Prostate gland (tissue), 2 donors: ENCODE measurements at regions of chr5 and their contacts with region 1.

Region 1: GRCh38 chr5:38556599-38557305 is at the start of gene LIFR:
- DNase-seq: peak; percentile 84
- H3K4me3 ChIP-seq: peak within 1 kb of the TSS; percentile 90 to 96
- H3K27ac ChIP-seq: peak within 1 kb of the TSS; percentile 99
- H3K4me1 ChIP-seq: no peaks in the 10 kb centered on the region
- H3K27me3 ChIP-seq: no peaks in the 10 kb centered on the region
- CTCF ChIP-seq: no peak
- POLR2A ChIP-seq: peak; percentile 81
- total RNA-seq, gene LIFR: 68.5 to 120 TPM

Region 2: GRCh38 chr5:38607396-38607795 is 50.6 kb after region 1 on chr5:
- intact Hi-C with region 1: no loop called
- DNase-seq: no peak
- H3K4me3 ChIP-seq: no peak overlapping the region
- H3K27ac ChIP-seq: peak overlapping the region in 1 of 2 donors; percentile 48
- H3K4me1 ChIP-seq: no peaks in the 10 kb centered on the region
- H3K27me3 ChIP-seq: no peaks in the 10 kb centered on the region
- CTCF ChIP-seq: no peak
- POLR2A ChIP-seq: no peak

Region 3: DNA sequence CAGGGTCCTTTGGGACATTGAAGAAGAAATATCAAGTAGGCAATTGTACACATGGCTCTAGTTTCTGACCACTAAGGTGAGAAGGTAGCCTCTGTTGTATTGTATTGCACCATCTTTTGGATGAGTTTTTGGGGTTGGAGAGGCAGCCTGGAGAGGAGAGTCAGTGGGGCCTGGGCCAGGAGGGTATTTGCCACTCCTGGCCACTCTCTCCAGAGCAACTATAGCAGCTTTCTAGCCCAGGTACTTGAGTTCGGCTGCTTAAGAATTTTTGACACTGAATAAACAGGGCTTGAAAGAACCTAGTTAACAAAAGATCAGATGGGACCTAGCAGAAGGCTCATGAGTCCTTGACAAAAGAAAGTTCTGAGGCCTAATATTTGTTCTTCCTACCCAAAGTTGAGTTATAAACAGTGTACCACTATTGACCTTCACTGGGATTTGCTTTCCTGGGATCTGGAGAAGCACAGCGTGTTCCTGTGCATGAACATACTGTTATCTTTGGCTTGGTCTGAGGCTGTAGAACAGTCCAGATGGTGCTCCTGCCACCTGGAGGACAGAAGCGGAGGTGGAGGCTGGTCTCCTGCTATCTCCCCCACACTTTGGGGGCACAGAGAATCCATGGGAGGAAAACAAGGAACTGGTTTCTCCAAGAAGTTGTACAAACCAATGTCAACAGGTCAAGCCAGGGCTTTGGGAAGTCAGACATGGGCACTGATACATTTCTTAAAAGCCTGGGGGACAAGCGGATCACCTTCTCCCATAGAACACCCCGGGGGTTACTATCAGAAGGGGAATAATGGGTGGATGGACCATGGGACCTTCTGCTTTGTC is 110.1 kb after region 1 on chr5:
- intact Hi-C with region 1: loop called (anchors 5 kb)
- DNase-seq: peak; percentile 73
- H3K4me3 ChIP-seq: no peak overlapping the region
- H3K27ac ChIP-seq: peak overlapping the region; percentile 74 to 82
- H3K4me1 ChIP-seq: peaks cover 7% of the 10 kb centered on the region
- H3K27me3 ChIP-seq: no peaks in the 10 kb centered on the region
- CTCF ChIP-seq: peak; percentile 56 to 82 (median 75)
- POLR2A ChIP-seq: no peak